ENCODE measurements at regions of chr15 and their contacts with region 1.

Region 1: GRCh38 chr15:57527382-57528091 is 64.2 kb upstream of the MYZAP start:
- DNase-seq: peak; percentile 64 to 89
- ATAC-seq: peak; percentile 80 to 89
- H3K4me3 ChIP-seq: no peak overlapping the region
- H3K27ac ChIP-seq: peak overlapping the region in 1 of 2 experiments; percentile 14; a peak in 1 of 6 replicates
- H3K4me1 ChIP-seq: peaks cover 4% of the 10 kb centered on the region; the same call in 2 of the 3 replicates
- CTCF ChIP-seq: peak; percentile 96
- EP300 ChIP-seq: no peak
- POLR2A ChIP-seq: no peak
- RAD21 ChIP-seq: peak; percentile 98 to 99

Region 2: GRCh38 chr15:57251941-57252340 is 275.6 kb before region 1 on chr15:
- CTCF ChIA-PET with region 1: no interaction called
- POLR2A ChIA-PET with region 1: no interaction called
- DNase-seq: no peak
- ATAC-seq: no peak
- H3K4me3 ChIP-seq: no peak overlapping the region
- H3K27ac ChIP-seq: no peak overlapping the region
- H3K4me1 ChIP-seq: no peaks in the 10 kb centered on the region
- CTCF ChIP-seq: no peak
- EP300 ChIP-seq: no peak
- POLR2A ChIP-seq: no peak
- RAD21 ChIP-seq: no peak

Region 3: DNA sequence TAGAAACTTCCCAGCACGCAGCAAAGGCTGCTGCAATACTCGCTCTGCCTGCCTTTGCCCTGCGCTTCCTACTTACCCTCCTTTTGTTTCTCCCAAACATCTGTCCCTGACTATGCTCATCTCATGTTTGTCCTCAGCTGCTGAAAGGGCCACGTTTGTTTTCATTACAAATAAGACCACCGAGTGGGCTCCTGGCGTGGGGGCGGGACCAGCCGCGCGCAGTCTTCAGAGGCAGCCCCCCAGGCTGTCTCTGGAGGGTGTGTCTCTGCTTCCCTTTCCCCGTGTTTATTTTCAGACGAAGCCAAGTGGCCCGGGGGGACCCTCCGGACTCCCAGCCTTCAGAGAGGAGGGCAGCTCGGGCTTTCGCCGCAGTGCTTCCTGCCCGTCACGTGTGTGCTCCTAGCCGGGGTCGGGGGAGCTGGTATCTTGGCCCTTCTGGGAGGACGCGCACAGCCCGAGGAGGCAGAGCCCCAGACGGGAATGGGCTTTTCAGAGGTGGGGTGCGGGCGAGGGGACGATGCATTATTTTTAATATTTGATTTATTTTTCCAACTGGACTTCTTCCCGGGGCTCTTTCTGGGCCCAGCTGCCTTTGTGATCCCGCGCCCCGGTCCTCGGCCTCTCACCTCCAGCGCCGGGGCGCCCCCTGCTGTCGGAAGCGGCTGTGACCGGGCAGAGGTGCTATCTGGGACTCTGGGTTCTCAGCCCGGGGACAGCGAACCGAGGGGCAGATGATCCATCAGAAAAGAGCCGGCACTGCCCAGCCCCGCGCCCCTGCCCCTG is 221.2 kb before region 1 on chr15:
- CTCF ChIA-PET with region 1: interaction called, 12 read pairs
- POLR2A ChIA-PET with region 1: no interaction called
- DNase-seq: peak; percentile 77 to 96
- ATAC-seq: peak; percentile 88 to 96
- H3K4me3 ChIP-seq: peak overlapping the region; percentile 48
- H3K27ac ChIP-seq: peak overlapping the region; percentile 73 to 87
- H3K4me1 ChIP-seq: peaks cover 16% of the 10 kb centered on the region
- CTCF ChIP-seq: peak; percentile 96
- EP300 ChIP-seq: no peak
- POLR2A ChIP-seq: no peak
- RAD21 ChIP-seq: peak; percentile 88 to 96

Region 4: DNA sequence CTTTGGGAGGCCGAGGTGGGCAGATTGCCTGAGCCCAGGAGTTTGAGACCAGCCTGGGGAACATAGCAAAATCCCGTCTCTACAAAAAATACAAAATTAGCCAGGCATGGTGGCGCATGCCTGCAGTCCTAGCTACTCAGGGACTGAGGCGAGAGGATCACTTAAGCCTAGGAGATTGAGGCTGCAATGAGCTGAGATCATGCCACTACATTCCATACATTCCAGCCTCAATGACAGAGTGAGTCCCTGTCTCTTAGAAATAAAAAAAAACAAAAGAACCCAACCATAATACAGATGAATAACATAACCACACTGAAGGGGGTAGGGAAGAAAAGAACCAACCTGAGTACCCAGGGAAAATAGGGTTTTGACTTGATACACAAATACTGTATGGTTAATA is 170.9 kb before region 1 on chr15:
- CTCF ChIA-PET with region 1: interaction called, 50 read pairs
- POLR2A ChIA-PET with region 1: no interaction called
- DNase-seq: no peak
- ATAC-seq: peak in 1 of 2 experiments; percentile 40; a peak in 2 of 6 replicates
- H3K4me3 ChIP-seq: no peak overlapping the region
- H3K27ac ChIP-seq: no peak overlapping the region
- H3K4me1 ChIP-seq: no peaks in the 10 kb centered on the region
- CTCF ChIP-seq: no peak
- EP300 ChIP-seq: no peak
- POLR2A ChIP-seq: no peak
- RAD21 ChIP-seq: no peak

Region 5: DNA sequence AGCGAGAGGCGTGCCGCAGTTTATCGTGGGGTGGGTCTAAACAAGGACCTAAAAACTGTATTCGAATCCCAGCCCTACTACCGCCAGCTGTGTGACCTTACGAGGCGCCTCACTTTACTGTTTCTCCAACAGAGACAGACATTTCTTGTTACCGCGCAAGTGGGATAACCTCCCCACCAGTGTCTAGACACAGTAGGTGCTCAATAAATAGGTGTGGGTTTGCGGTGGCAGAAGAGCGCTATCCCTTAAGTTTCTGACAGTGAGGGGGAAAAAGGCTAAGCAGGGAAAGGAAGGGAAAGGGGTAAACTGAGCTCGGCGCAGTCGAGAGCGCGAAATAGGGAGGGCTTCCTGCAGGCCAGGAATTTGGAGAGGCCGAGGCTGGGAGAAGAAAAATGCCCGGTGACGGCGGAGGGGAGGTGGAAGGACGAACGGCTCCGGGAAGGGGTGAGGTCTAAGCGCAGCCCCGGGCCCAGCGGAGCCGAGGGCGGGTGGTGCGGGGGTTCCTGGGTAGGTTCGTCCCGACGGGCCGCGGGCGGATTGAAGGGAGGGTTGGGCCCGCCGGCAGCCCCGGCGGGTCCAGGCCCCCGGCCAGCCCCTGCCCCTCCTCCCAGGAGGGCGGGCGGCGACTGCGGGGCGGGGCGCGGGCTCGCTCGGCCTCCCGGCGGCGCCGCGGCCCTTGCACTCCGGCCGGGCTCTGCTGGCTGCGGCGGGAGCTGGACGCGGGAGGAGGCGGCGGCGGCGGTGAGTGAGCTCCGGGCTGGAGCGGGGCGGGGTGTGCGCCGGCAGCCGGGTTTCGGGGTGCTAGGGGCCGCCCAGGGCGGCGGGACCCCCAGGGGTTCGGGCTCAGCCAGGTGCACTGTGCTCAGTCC is 151.5 kb before region 1 on chr15 and contains the start of gene CGNL1:
- CTCF ChIA-PET with region 1: interaction called, 50 read pairs
- POLR2A ChIA-PET with region 1: no interaction called
- DNase-seq: peak in 1 of 2 experiments; percentile 62
- ATAC-seq: peak; percentile 80 to 81
- H3K4me3 ChIP-seq: peak within 1 kb of the TSS; percentile 91
- H3K27ac ChIP-seq: peak within 1 kb of the TSS; percentile 66 to 85
- H3K4me1 ChIP-seq: peaks cover 9% of the 10 kb centered on the region; the same call in 2 of the 3 replicates
- CTCF ChIP-seq: no peak
- EP300 ChIP-seq: no peak
- POLR2A ChIP-seq: peak; percentile 12; the same call in 1 of the 2 replicates
- RAD21 ChIP-seq: no peak; a peak in 1 of 5 replicates
- polyA plus RNA-seq, gene CGNL1: 1.8 and 2.3 TPM in 2 replicates

Region 6: DNA sequence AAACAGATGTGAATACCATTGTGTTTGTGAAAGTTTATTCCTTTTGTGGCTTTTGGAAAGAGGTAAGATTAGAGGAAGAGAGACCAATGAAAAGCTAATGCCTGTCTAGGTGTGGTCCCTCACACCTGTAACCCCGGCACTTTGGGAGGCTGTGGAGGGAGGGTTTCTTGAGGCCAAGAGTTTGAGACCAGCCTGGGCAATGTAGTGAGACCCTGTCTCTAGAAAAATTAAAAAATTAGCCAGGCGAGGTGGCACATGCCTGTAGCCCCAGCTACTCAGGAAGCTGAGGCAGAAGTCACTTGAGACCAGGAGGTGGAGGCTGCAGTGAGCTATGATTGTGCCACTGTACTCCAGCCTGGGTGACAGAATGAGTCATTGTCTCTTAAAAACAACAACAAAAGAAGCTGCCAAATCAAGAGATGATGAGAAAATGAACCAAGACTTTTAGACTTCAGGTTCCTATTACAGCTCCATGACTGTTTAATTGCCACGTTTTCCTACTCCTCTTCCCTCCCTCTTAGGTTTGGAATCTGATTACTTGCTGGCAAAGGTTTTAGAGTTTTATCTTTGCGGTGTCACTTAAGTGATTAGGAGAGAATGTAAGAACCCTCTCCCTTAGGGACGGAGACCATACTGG is 82.5 kb before region 1 on chr15:
- CTCF ChIA-PET with region 1: interaction called, 10 read pairs
- POLR2A ChIA-PET with region 1: no interaction called
- DNase-seq: no peak
- ATAC-seq: no peak
- H3K4me3 ChIP-seq: no peak overlapping the region
- H3K27ac ChIP-seq: peak overlapping the region; percentile 71 to 72; a peak in 5 of 6 replicates
- H3K4me1 ChIP-seq: peaks cover 17% of the 10 kb centered on the region
- CTCF ChIP-seq: no peak
- EP300 ChIP-seq: no peak
- POLR2A ChIP-seq: no peak
- RAD21 ChIP-seq: no peak

Region 7: DNA sequence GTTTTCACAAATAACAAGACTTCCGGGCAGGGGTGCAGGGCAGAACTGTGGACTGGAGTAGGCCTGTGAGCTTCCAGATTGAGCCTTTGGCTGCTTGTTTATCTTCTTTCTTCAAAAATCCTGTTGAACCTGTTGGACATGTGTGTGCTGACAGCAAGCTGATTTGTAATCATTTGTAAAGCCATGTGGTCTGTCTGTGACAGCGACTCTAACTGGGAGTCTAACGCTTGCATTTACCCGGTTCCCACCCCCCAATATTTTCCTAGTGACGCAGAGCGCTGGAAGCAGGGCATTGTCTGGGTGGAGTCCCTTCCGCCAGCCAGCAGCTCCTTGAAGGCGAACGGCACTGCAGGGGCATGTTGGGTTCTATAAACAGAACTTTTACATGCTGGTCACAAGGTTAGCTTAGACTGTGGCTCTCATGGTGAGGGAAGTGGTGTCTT is 21.6 kb before region 1 on chr15:
- CTCF ChIA-PET with region 1: interaction called, 99 read pairs
- POLR2A ChIA-PET with region 1: no interaction called
- DNase-seq: peak in 1 of 2 experiments; percentile 39
- ATAC-seq: peak in 1 of 2 experiments; percentile 7; a peak in 2 of 6 replicates
- H3K4me3 ChIP-seq: no peak overlapping the region
- H3K27ac ChIP-seq: peak overlapping the region; percentile 41 to 64; a peak in 5 of 6 replicates
- H3K4me1 ChIP-seq: peaks cover 46% of the 10 kb centered on the region
- CTCF ChIP-seq: no peak
- EP300 ChIP-seq: no peak
- POLR2A ChIP-seq: no peak
- RAD21 ChIP-seq: no peak